Activated CD8-positive, alpha-beta T cell treated with anti-CD3 and anti-CD28 coated beads for 36 hours (primary cell): ENCODE measurements at regions of chr6 and their contacts with region 1.

Region 1: GRCh38 chr6:26003102-26003694 is 40.6 kb downstream of the TRIM38 start:
- DNase-seq: peak; percentile 63
- ATAC-seq: peak; percentile 49
- H3K4me3 Mint-ChIP-seq: no peak overlapping the region
- H3K27ac Mint-ChIP-seq: no peak overlapping the region
- H3K4me1 Mint-ChIP-seq: no peaks in the 10 kb centered on the region
- H3K27me3 Mint-ChIP-seq: no peaks in the 10 kb centered on the region
- CTCF ChIP-seq: peak; percentile 89

Region 2: GRCh38 chr6:25717866-25718740 is 285.1 kb before region 1 on chr6:
- CTCF ChIA-PET with region 1: interaction called, 27 read pairs
- POLR2A ChIA-PET with region 1: no interaction called
- intact Hi-C with region 1: loop called (anchors 5 kb)
- DNase-seq: no peak
- ATAC-seq: no peak
- H3K4me3 Mint-ChIP-seq: no peak overlapping the region
- H3K27ac Mint-ChIP-seq: no peak overlapping the region
- H3K4me1 Mint-ChIP-seq: no peaks in the 10 kb centered on the region
- H3K27me3 Mint-ChIP-seq: peaks cover 9% of the 10 kb centered on the region
- CTCF ChIP-seq: peak; percentile 62

Region 3: DNA sequence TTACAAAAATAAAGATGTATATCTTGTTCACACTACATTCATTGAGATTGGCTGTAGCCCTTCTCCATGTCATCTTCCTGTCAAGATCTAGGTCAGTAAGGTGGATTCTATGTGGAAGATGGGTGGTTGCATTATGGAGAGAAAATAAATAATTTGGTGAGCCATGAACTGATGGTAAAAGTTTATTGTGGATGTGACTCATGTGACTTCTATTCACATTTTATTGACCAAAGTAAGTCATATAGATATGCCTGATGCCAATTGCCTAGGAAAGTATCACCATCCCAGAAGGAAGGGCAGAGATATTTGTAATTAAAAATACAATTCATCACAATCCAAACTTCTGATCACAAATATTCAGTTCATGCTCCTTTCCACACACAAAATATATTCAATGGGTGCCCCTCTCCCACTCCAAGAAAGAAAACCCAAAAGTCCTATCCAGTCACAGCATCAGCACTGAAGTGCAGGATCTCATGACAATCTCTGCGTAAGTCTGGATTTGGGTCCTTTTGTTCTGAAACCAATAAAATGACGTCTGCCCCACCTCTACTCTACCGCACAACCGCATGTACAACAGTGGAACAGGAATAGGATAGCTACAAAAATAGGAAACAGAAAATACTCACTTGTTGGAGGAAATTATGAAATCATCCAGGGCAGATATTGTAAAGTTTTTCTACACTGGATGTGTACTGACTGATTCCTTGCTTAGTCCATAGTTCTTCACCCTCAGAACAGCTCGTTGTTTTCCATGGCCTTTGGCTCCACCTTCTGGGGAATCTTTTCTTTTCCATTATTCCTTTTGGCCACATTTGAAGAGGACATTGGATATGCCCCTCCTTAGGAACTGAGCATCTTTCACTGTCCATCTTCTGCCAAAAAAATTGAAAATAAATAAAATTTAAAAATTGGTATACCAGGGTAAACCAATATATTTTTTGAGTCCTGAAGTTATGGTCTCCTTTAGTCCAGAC is 113.0 kb before region 1 on chr6:
- CTCF ChIA-PET with region 1: no interaction called
- POLR2A ChIA-PET with region 1: no interaction called
- intact Hi-C with region 1: loop called (anchors 10 kb)
- DNase-seq: no peak
- ATAC-seq: no peak
- H3K4me3 Mint-ChIP-seq: no peak overlapping the region
- H3K27ac Mint-ChIP-seq: no peak overlapping the region
- H3K4me1 Mint-ChIP-seq: no peaks in the 10 kb centered on the region
- H3K27me3 Mint-ChIP-seq: peaks cover 3% of the 10 kb centered on the region
- CTCF ChIP-seq: peak; percentile 33

Region 4: GRCh38 chr6:25968769-25969168 is 34.4 kb before region 1 on chr6:
- CTCF ChIA-PET with region 1: interaction called, 14 read pairs
- POLR2A ChIA-PET with region 1: no interaction called
- intact Hi-C with region 1: no loop called
- DNase-seq: no peak
- ATAC-seq: no peak
- H3K4me3 Mint-ChIP-seq: no peak overlapping the region
- H3K27ac Mint-ChIP-seq: peak overlapping the region; percentile 36
- H3K4me1 Mint-ChIP-seq: peaks cover 61% of the 10 kb centered on the region
- H3K27me3 Mint-ChIP-seq: no peaks in the 10 kb centered on the region
- CTCF ChIP-seq: no peak

Region 5: DNA sequence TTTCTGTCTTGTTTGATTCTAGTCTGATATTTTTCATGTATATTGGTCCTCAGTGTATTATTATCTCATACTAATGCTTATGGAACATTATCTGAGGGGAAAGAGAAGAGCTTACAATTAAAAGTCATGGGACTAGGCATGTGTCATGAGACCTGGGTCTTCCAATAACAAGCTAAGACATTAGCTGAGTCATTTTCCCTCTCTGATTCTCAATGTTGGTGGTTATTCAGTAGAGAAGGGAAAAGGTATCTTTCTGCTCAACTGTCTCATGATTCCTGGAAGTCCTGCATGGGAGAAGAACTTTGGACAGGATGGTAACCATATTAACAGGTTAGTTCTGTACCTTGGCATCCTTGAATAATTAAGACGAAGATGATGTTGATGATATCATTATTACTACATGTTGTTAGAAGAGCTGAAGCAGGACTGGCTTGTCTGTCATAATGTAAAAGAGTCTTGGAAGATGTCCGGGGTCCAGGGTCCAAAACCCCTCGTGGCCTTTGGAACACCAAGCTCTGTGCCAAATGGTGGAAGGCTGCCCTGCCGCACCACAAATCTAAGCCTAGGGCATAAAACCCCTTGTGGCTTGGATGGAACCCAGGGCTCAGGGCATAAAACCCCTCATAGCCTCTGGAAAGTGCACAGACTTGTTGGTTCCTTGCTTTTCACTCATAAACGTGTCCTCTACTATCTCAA is 21.5 kb before region 1 on chr6:
- CTCF ChIA-PET with region 1: interaction called, 10 read pairs
- POLR2A ChIA-PET with region 1: interaction called, 4 read pairs
- intact Hi-C with region 1: no loop called
- DNase-seq: no peak
- ATAC-seq: no peak
- H3K4me3 Mint-ChIP-seq: no peak overlapping the region
- H3K27ac Mint-ChIP-seq: peak overlapping the region; percentile 28
- H3K4me1 Mint-ChIP-seq: peaks cover 18% of the 10 kb centered on the region
- H3K27me3 Mint-ChIP-seq: no peaks in the 10 kb centered on the region
- CTCF ChIP-seq: no peak

Region 6: DNA sequence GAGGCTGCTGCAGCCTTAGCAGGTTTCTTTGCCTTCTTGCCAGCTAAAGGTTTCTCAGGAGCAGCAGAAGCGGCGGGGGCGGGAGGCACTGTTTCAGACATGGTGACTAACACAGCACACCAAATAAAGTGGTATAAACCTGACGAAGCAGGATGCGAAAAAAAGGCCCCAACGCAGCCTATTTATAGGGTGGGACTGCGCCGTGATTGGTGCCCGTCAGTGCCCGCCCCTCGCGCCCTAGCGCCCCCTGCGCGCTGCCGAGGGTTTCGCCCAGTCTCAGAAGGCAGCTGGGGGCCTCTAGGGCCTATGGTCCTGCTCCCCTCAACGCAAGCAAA is 14.4 kb after region 1 on chr6:
- CTCF ChIA-PET with region 1: interaction called, 98 read pairs
- POLR2A ChIA-PET with region 1: interaction called, 10 read pairs
- intact Hi-C with region 1: no loop called
- DNase-seq: peak; percentile 97
- ATAC-seq: peak; percentile 50
- H3K4me3 Mint-ChIP-seq: peak overlapping the region; percentile 73
- H3K27ac Mint-ChIP-seq: peak overlapping the region; percentile 90
- H3K4me1 Mint-ChIP-seq: peaks cover 33% of the 10 kb centered on the region
- H3K27me3 Mint-ChIP-seq: no peaks in the 10 kb centered on the region
- CTCF ChIP-seq: no peak